ENCODE measurements at regions of chr1 and their contacts with region 1.

Region 1: DNA sequence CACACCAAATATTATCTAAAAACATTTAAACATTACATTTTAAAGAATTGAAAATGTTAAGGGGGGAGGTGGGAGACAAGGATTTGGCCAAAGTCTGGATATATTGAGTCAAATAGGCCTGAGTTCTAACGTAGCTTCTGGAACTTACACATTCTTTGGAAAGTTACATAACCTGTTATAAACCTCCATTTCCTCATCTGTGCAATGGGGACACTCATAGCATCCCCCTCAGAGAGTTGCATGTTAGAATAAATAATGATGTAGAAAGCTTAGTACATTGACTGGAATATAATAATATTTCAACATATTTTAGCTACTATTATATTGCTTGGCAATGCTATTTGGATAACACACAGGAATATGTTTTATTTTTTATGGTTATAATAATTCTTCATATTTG is 117.7 kb downstream of the ATG4C start:
- DNase-seq: no peak
- H3K4me3 ChIP-seq: no peak overlapping the region
- CTCF ChIP-seq: no peak

Region 2: GRCh38 chr1:62912028-62912638 is 10.5 kb after region 1 on chr1:
- CTCF ChIA-PET with region 1: interaction called, 11 read pairs
- POLR2A ChIA-PET with region 1: no interaction called
- DNase-seq: no peak
- H3K4me3 ChIP-seq: no peak overlapping the region
- CTCF ChIP-seq: peak; percentile 73

Measured in AG04449 (cell line).